Ascending aorta (tissue), 2 donors: ENCODE measurements at regions of chr22 and their contacts with region 1.

Region 1: GRCh38 chr22:46116491-46116958 is 33.8 kb upstream of the PPARA start:
- DNase-seq: peak; percentile 67 to 97
- H3K4me3 ChIP-seq: no peak overlapping the region
- H3K27ac ChIP-seq: peak overlapping the region; percentile 72 to 94
- H3K4me1 ChIP-seq: peaks cover 9 to 31% of the 10 kb centered on the region in 2 donors
- H3K27me3 ChIP-seq: no peaks in the 10 kb centered on the region
- CTCF ChIP-seq: peak; percentile 96 to 98 (median 97)

Region 2: DNA sequence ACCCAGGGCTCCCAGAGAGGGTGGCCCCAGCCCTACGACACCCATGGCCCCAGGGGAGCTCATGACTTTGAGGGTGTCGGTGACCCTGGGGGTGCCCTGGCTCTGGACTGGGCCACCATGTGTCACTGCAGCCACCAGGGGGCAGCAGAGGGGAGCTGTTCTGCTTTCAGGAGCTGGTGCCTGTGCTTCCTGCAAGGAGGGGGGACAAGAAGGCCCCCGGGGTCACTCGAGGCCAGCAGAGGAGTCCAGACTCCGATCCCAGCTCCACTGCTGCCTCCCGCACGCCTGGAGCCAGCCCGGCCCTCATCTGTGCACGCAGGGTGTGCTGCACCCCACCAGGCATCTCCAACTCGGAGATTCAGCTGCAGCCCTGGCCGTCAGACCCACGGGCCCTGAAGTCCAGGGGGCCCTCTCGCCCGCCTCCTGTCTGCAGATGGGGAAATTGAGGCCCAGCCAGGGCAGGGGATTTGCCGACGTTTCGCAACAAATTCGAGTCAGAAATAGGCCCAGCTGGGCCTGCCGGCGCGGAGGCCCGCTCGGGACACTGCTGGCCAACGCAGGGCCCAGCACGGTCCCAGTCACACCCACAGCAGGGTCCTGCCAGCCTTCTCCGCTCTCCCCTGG is 110.0 kb before region 1 on chr22:
- intact Hi-C with region 1: loop called (anchors 1 kb)
- DNase-seq: peak; percentile 75 to 95
- H3K4me3 ChIP-seq: peak overlapping the region; percentile 31 to 37
- H3K27ac ChIP-seq: peak overlapping the region; percentile 97 to 99
- H3K4me1 ChIP-seq: peaks cover 21 to 28% of the 10 kb centered on the region in 2 donors
- H3K27me3 ChIP-seq: no peaks in the 10 kb centered on the region
- CTCF ChIP-seq: peak; percentile 90 to 98 (median 95)

Region 3: GRCh38 chr22:46079861-46080821 is 36.4 kb before region 1 on chr22:
- intact Hi-C with region 1: loop called (anchors 2 kb)
- DNase-seq: peak; percentile 71 to 96
- H3K4me3 ChIP-seq: peak overlapping the region; percentile 80 to 89
- H3K27ac ChIP-seq: peak overlapping the region; percentile 96 to 100
- H3K4me1 ChIP-seq: peaks cover 23 to 55% of the 10 kb centered on the region in 2 donors
- H3K27me3 ChIP-seq: no peaks in the 10 kb centered on the region
- CTCF ChIP-seq: peak in 1 of 3 experiments; percentile 8